Heart right ventricle (tissue), 16 donors: ENCODE measurements at regions of chr2 and their contacts with region 1.

Region 1: GRCh38 chr2:191245046-191245868 is at the start of gene MYO1B:
- DNase-seq: peak; percentile 68 to 76
- ATAC-seq: peak; percentile 69 to 87 (median 82)
- H3K4me3 ChIP-seq: peak within 1 kb of the TSS; percentile 58 to 88 (median 76)
- H3K27ac ChIP-seq: peak within 1 kb of the TSS; percentile 75 to 93 (median 87)
- H3K4me1 ChIP-seq: peaks cover 5 to 50% (median 26%) of the 10 kb centered on the region in 9 donors
- H3K27me3 ChIP-seq: peaks cover 0 to 32% (median 0%) of the 10 kb centered on the region in 7 donors
- CTCF ChIP-seq: peak; percentile 13 to 82 (median 59)
- total RNA-seq, gene MYO1B: 8.7 to 32.4 (median 15.9) TPM

Region 2: GRCh38 chr2:191302459-191303139 is 57.3 kb after region 1 on chr2:
- intact Hi-C with region 1: loop called in 3 of 10 experiments (anchors 5 kb)
- DNase-seq: no peak
- ATAC-seq: no peak
- H3K4me3 ChIP-seq: no peak overlapping the region
- H3K27ac ChIP-seq: peak overlapping the region in 4 of 10 donors; percentile 2 to 81 (median 44)
- H3K4me1 ChIP-seq: peaks cover 0 to 55% (median 30%) of the 10 kb centered on the region in 9 donors
- H3K27me3 ChIP-seq: no peaks in the 10 kb centered on the region
- CTCF ChIP-seq: peak in 2 of 9 donors; percentile 13 to 26

Region 3: DNA sequence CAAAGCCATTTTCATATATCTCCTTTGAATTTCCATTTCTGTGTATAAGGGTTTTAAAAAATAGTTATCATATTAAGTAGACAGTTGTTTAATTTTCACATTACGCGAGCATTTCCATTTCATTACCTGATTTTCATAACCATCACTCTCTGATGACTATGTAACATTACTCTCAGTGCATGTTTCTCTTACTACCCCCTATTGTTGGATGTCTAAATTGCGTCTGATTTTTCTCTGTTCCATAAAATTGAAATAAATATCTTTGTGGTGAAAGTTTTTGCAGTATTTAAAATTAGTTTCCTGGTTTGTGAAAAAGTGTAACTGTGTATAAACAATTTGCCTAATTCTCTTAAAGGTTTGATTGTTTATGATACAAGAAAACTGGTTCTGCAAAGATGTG is 123.8 kb after region 1 on chr2:
- intact Hi-C with region 1: loop called in 3 of 10 experiments (anchors 10 kb)
- DNase-seq: no peak
- ATAC-seq: no peak
- H3K4me3 ChIP-seq: no peak overlapping the region
- H3K27ac ChIP-seq: no peak overlapping the region
- H3K4me1 ChIP-seq: peaks cover 0 to 15% (median 0%) of the 10 kb centered on the region in 9 donors
- H3K27me3 ChIP-seq: no peaks in the 10 kb centered on the region
- CTCF ChIP-seq: peak in 6 of 9 donors; percentile 21 to 48 (median 34)

Region 4: GRCh38 chr2:191376981-191377629 is 131.8 kb after region 1 on chr2:
- intact Hi-C with region 1: loop called in 6 of 10 experiments (anchors 10 kb)
- DNase-seq: peak; percentile 26 to 70
- ATAC-seq: peak; percentile 79 to 98 (median 95)
- H3K4me3 ChIP-seq: no peak overlapping the region
- H3K27ac ChIP-seq: peak overlapping the region in 6 of 10 donors; percentile 11 to 75 (median 56)
- H3K4me1 ChIP-seq: peaks cover 0 to 24% (median 15%) of the 10 kb centered on the region in 9 donors
- H3K27me3 ChIP-seq: no peaks in the 10 kb centered on the region
- CTCF ChIP-seq: no peak

Region 5: GRCh38 chr2:191382801-191383200 is 137.5 kb after region 1 on chr2:
- intact Hi-C with region 1: loop called in 6 of 10 experiments (anchors 10 kb)
- DNase-seq: peak in 1 of 2 donors; percentile 16
- ATAC-seq: peak in 2 of 8 donors; percentile 28 to 63
- H3K4me3 ChIP-seq: no peak overlapping the region
- H3K27ac ChIP-seq: peak overlapping the region in 3 of 10 donors; percentile 4 to 62 (median 41)
- H3K4me1 ChIP-seq: peaks cover 0 to 34% (median 18%) of the 10 kb centered on the region in 9 donors
- H3K27me3 ChIP-seq: no peaks in the 10 kb centered on the region
- CTCF ChIP-seq: no peak